IMR-90 (cell line): ENCODE measurements at regions of chr19 and their contacts with region 1.

Region 1: GRCh38 chr19:44587963-44588770 is 25.2 kb upstream of the IGSF23 start:
- DNase-seq: peak; percentile 96
- ATAC-seq: peak; percentile 84
- H3K4me3 ChIP-seq: no peak overlapping the region
- H3K27ac ChIP-seq: peak overlapping the region; percentile 99
- H3K4me1 ChIP-seq: peaks cover 16% of the 10 kb centered on the region
- H3K27me3 ChIP-seq: no peaks in the 10 kb centered on the region
- CTCF ChIP-seq: peak; percentile 71
- POLR2A ChIP-seq: no peak; the same call in 1 of the 2 replicates
- RAD21 ChIP-seq: peak; percentile 75

Region 2: DNA sequence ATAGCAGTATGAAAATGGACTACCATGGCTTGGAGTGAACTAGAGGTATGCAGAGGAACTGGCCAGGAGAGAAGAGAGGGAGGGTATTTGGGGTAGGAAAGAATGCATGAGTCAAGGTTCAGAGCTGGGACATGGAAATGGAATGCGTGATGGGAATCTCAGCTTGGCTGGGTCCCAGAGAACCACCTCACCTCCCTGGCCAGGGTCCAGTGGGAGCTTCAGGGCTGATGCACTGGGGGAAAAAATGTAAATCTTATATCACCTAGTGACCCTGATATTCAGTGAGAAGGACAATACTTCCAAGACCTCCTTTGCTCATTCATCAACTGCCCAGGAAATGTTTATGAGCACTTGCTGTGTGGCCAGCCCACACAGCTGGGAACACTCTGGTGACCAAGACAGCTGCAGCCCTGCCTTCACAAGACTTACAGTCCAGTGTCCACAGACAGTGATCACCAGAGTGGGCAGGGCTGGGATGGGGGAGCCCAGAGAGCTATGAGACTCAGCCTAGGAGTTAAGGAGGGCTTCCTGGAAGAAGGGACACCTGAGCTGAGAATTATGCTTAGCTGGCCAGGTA is 38.0 kb after region 1 on chr19:
- CTCF ChIA-PET with region 1: no interaction called
- POLR2A ChIA-PET with region 1: no interaction called
- dilution Hi-C with region 1: no loop called
- in situ Hi-C with region 1: no loop called
- intact Hi-C with region 1: loop called (anchors 1 kb)
- DNase-seq: peak; percentile 99
- ATAC-seq: peak; percentile 90
- H3K4me3 ChIP-seq: no peak overlapping the region
- H3K27ac ChIP-seq: peak overlapping the region; percentile 89
- H3K4me1 ChIP-seq: peaks cover 15% of the 10 kb centered on the region
- H3K27me3 ChIP-seq: no peaks in the 10 kb centered on the region
- CTCF ChIP-seq: no peak
- POLR2A ChIP-seq: no peak
- RAD21 ChIP-seq: 0 out of 2 replicates have a peak, but pooled peaks have one; percentile 11

Region 3: DNA sequence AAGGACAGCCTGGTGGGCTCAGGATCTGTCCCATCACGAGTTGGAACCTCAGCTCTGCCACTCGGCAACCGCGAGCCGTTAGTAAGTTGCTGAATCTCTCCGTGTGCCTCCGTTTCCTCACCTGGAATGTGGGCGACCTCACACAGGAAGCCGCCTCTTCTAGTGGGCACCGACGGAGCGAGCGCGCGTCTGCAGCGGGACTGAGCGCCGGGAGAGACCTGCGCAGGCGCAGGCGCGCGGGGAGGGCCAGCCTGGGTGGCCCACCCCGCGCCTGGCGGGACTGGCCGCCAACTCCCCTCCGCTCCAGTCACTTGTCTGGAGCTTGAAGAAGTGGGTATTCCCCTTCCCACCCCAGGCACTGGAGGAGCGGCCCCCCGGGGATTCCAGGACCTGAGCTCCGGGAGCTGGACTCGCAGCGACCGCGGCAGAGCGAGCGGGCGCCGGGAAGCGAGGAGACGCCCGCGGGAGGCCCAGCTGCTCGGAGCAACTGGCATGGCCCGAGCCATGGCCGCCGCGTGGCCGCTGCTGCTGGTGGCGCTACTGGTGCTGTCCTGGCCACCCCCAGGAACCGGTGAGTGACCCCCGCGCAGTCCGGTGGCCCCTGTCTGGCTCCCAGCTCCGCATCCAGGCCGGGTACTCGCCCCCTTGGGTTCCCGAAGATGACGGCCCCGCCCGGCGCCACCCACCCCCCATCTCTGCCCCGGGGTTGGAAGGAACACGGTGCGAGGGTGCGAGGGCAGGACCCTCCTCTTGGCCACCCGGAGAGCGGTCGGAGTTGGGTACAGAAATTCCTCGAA is 55.6 kb after region 1 on chr19 and contains the start of gene PVR:
- CTCF ChIA-PET with region 1: interaction called, 9 read pairs
- POLR2A ChIA-PET with region 1: no interaction called
- dilution Hi-C with region 1: no loop called
- in situ Hi-C with region 1: no loop called
- intact Hi-C with region 1: loop called (anchors 2 kb)
- DNase-seq: peak; percentile 77
- ATAC-seq: peak; percentile 92
- H3K4me3 ChIP-seq: peak within 1 kb of the TSS; percentile 77
- H3K27ac ChIP-seq: peak within 1 kb of the TSS; percentile 91
- H3K4me1 ChIP-seq: peaks cover 14% of the 10 kb centered on the region
- H3K27me3 ChIP-seq: no peaks in the 10 kb centered on the region
- CTCF ChIP-seq: no peak
- POLR2A ChIP-seq: peak; percentile 83
- RAD21 ChIP-seq: no peak
- total RNA-seq, gene PVR: 93.0 and 106 TPM in 2 replicates

Region 4: DNA sequence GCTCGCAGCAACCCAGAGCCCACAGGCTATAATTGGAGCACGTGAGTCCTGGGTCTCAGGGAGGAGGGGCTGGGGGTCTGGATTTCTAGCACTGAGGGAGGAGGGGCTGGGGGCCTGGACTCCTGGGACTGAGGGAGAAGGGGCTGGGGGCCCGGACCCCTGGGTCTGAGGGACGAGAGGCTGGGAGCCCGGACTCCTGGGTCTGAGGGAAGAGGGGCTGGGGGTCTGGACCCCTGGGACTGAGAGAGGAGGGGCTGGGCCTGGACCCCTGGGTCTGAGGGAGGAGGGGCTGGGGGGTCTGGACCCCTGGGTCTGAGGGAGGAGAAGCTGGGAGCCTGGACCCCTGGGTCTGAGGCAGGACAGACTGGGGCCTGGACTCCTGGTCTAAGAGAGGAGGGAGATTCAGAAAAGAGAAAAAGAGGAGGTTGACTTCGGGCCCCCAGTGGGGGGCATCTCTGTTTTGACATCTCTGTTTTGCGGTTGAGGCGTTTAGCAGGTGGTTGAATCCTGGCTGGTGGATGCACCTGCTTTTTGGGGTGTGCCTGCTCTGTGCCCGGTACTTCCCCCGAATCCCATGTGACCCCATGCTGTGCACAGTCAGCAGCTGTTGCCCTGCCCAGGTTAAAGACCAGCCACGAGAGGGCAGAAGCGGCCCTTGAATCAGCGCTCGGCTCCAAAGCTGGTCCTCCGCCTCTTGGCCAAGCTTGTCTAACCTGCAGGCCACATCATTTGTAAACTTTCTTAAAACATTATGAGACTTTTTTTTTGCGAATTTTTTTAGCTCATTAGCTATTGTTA is 66.0 kb after region 1 on chr19:
- CTCF ChIA-PET with region 1: interaction called, 7 read pairs
- POLR2A ChIA-PET with region 1: no interaction called
- dilution Hi-C with region 1: no loop called
- in situ Hi-C with region 1: no loop called
- intact Hi-C with region 1: loop called (anchors 1 kb)
- DNase-seq: peak; percentile 43
- ATAC-seq: peak; percentile 35; the same call in 1 of the 2 replicates
- H3K4me3 ChIP-seq: no peak overlapping the region
- H3K27ac ChIP-seq: no peak overlapping the region
- H3K4me1 ChIP-seq: peaks cover 3% of the 10 kb centered on the region; the same call in 1 of the 2 replicates
- H3K27me3 ChIP-seq: no peaks in the 10 kb centered on the region
- CTCF ChIP-seq: peak; percentile 54
- POLR2A ChIP-seq: no peak
- RAD21 ChIP-seq: peak; percentile 53

Region 5: GRCh38 chr19:44770550-44771257 is 182.5 kb after region 1 on chr19:
- CTCF ChIA-PET with region 1: interaction called, 7 read pairs
- POLR2A ChIA-PET with region 1: no interaction called
- dilution Hi-C with region 1: no loop called
- in situ Hi-C with region 1: no loop called
- intact Hi-C with region 1: loop called (anchors 5 kb)
- DNase-seq: peak; percentile 91
- ATAC-seq: peak; percentile 93
- H3K4me3 ChIP-seq: no peak overlapping the region
- H3K27ac ChIP-seq: peak overlapping the region; percentile 59
- H3K4me1 ChIP-seq: peaks cover 12% of the 10 kb centered on the region
- H3K27me3 ChIP-seq: no peaks in the 10 kb centered on the region
- CTCF ChIP-seq: peak; percentile 95
- POLR2A ChIP-seq: no peak
- RAD21 ChIP-seq: peak; percentile 95